GM10248 (cell line): ENCODE measurements at regions of chr4 and their contacts with region 1.

Region 1: DNA sequence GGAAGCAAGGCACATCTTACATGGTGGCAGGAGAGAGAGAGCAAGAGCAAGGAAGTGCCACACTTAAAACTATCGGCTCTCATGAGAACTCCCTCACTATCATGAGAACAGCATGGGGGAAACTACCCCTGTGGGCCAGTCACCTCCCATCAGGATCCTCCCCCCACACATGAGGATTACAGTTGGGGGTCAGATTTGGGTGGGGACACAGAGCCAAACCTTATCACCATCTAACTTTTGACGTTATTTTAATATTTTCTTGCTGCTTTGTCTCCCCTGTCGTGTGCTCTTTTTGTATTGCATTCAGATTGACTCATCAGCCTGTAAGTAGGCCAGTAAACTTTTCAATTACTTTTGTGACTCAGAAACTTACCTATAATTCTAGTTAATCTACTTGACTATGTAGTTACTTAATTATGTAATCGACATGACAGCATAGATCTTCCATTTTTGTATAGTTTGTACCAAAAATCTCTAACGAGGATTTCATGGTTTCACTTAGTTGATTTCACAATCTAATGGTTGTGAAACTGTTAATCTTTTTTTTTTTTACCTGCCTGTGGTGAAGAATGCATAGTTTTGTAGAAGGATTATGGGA is 18.3 kb downstream of the STIM2 start:
- DNase-seq: no peak
- CTCF ChIP-seq: no peak

Region 2: GRCh38 chr4:26867914-26868684 is 10.8 kb before region 1 on chr4:
- CTCF ChIA-PET with region 1: interaction called, 12 read pairs
- POLR2A ChIA-PET with region 1: no interaction called
- DNase-seq: no peak
- CTCF ChIP-seq: no peak

Region 3: DNA sequence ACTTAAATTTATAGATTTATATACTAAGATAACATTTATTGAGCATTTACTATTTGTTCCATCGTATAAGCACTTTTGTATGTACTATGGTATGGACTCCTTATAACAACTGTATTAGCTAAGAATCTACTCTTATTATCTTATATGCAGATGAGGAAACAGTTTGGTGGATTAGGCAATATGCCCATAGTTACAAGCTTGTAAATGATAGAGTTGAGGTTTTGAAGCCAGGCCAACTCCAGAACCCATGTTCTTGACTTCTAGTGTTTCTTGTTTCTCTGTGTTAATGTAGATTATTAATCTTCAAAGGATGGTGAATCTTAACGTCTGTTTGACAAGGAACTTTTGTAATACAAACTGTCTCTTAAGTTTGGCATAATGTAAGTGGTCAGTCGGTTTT is 53.1 kb after region 1 on chr4:
- CTCF ChIA-PET with region 1: no interaction called
- POLR2A ChIA-PET with region 1: no interaction called
- DNase-seq: no peak
- CTCF ChIP-seq: no peak

Region 4: DNA sequence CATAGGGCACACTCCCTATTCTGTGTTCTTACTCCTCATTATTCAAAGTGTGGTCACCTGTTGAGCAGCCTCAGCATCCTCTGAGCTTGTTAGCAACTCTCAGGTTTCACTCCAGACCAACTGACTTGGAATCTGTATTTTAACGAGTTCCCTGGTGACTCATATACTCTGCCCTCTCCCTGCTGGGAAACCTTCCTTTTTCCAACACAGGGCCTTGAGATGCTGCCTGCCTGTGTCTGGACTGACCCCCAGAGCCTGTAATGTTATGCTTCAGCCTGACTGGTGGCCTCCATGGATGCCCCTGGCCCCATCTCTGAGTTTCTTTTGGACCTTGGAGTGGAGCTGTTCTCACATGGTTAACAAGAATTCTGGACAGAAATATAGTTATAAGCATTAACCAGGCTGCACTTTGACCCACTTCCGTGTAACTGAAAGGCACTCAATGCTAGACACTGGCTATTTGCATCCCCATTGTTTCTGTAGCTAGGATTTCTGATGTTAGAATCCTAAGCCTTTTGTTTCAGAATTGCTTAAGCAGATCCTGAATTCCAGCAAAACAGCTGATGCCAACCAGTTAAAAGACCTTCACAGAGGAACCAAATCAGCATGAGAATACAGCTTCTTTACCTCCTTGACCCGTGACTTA is 244.4 kb after region 1 on chr4:
- CTCF ChIA-PET with region 1: no interaction called
- POLR2A ChIA-PET with region 1: no interaction called
- DNase-seq: no peak
- CTCF ChIP-seq: no peak